Right cardiac atrium (tissue), 5 donors: ENCODE measurements at regions of chr5 and their contacts with region 1.

Region 1: DNA sequence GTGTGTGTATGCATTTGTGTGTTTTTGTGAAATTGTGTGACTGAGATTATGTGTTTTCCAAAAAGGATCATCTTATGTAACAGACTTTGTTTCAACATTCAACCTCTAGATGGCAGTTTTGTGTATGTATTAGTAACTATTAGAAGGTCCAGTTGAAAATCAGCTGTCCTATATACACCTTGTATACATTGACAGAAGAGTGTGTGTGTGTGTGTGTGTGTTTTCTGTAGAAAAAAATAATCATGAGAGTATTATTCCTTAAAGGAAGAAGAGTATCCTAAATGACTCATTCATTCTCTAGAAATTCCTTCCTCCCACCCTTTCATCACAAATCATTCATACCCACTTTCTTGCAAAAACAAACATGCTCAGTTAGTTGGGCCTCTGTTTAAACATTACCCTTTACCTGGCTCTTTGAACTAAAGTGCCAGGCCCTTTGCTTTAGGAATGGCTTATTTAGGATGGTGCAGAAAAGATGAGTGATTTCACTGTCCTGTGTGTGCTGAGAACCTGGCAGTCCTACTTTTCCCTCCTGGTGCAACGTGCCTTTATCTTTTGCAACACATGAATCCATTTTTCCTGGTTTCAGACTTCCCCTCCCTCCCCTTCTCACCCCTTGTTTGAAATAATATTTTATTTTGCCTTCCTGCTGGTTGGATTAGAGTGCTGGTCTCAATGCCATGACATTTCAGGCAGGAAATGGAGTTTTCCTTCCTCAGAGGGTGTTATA is 152.2 kb downstream of the ARHGAP26 start:
- DNase-seq: no peak
- ATAC-seq: peak; percentile 48 to 51
- H3K4me3 ChIP-seq: no peak overlapping the region
- H3K27ac ChIP-seq: no peak overlapping the region
- H3K4me1 ChIP-seq: no peaks in the 10 kb centered on the region
- H3K27me3 ChIP-seq: no peaks in the 10 kb centered on the region

Region 2: GRCh38 chr5:142959683-142960657 is 37.6 kb after region 1 on chr5:
- intact Hi-C with region 1: loop called in 2 of 4 experiments (anchors 5 kb)
- DNase-seq: no peak
- ATAC-seq: no peak
- H3K4me3 ChIP-seq: no peak overlapping the region
- H3K27ac ChIP-seq: no peak overlapping the region
- H3K4me1 ChIP-seq: peaks cover 13% of the 10 kb centered on the region
- H3K27me3 ChIP-seq: no peaks in the 10 kb centered on the region